Breast epithelium (tissue), 4 donors: ENCODE measurements at regions of chr11 and their contacts with region 1.

Region 1: DNA sequence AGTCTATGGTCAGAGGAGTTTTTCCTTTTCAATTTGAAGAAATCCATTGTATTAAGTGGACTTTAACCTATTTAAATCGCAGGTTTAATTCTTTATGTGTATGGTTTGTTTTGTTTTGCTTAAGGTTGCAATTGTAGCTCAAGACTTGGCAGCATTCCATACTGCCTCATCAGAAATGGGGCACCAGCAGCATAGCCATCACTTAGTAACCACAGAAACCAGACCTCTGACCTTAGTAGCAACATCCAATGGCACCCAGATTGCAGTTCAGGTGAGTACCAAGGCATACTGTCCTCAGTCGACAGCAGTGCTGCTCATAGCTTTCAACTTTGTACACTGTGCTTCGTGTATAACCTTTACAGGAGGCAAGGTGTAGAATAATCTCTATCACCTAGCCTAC is 48.4 kb upstream of the WEE1 start:
- DNase-seq: no peak
- H3K4me3 ChIP-seq: no peak overlapping the region
- H3K27ac ChIP-seq: no peak overlapping the region
- H3K4me1 ChIP-seq: peaks cover 5 to 7% of the 10 kb centered on the region in 2 donors
- H3K27me3 ChIP-seq: no peaks in the 10 kb centered on the region
- CTCF ChIP-seq: no peak
- POLR2A ChIP-seq: no peak

Region 2: DNA sequence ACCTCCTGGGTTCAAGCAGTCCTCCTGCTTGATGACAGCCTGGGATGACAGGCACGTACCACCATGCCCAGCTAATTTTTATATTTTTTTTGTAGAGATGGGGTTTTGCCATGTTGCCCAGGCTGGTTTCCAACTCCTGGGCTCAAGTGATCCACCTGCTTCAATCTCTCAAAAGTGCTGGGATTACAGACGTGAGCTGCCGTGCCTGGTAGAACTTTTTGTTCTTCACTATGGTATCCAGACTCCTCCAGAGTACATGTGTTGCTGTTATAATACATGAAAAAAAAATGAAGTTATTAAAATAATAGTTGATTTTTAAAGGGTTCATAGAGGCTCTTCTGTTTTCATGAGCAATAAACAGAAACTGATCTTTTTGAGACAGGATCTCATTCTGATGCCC is 34.7 kb before region 1 on chr11:
- intact Hi-C with region 1: loop called (anchors 2 kb)
- DNase-seq: no peak
- H3K4me3 ChIP-seq: no peak overlapping the region
- H3K27ac ChIP-seq: no peak overlapping the region
- H3K4me1 ChIP-seq: no peaks in the 10 kb centered on the region
- H3K27me3 ChIP-seq: no peaks in the 10 kb centered on the region
- CTCF ChIP-seq: no peak
- POLR2A ChIP-seq: no peak

Region 3: GRCh38 chr11:9590717-9591116 is 65.6 kb after region 1 on chr11:
- intact Hi-C with region 1: no loop called
- DNase-seq: no peak
- H3K4me3 ChIP-seq: no peak overlapping the region
- H3K27ac ChIP-seq: no peak overlapping the region
- H3K4me1 ChIP-seq: no peaks in the 10 kb centered on the region
- H3K27me3 ChIP-seq: no peaks in the 10 kb centered on the region
- CTCF ChIP-seq: no peak
- POLR2A ChIP-seq: no peak